ENCODE measurements at regions of chr14 and their contacts with region 1.

Region 1: GRCh38 chr14:94752591-94753436 is 17.1 kb downstream of the GSC start:
- DNase-seq: peak in 4 of 5 donors; percentile 46 to 68 (median 56)
- ATAC-seq: peak in 3 of 4 donors; percentile 40 to 66 (median 52)
- H3K4me3 ChIP-seq: peak overlapping the region in 3 of 12 donors; percentile 7 to 24 (median 22)
- H3K27ac ChIP-seq: peak overlapping the region in 5 of 12 donors; percentile 3 to 73 (median 48)
- H3K4me1 ChIP-seq: peaks cover 0 to 5% (median 0%) of the 10 kb centered on the region in 12 donors
- H3K27me3 ChIP-seq: peaks cover 0 to 11% (median 0%) of the 10 kb centered on the region in 9 donors
- CTCF ChIP-seq: no peak
- POLR2A ChIP-seq: no peak

Region 2: GRCh38 chr14:94646481-94646880 is 106.3 kb before region 1 on chr14:
- intact Hi-C with region 1: no loop called
- DNase-seq: peak in 2 of 5 donors; percentile 25 to 52
- ATAC-seq: peak in 3 of 4 donors; percentile 40 to 91 (median 68)
- H3K4me3 ChIP-seq: no peak overlapping the region
- H3K27ac ChIP-seq: no peak overlapping the region
- H3K4me1 ChIP-seq: no peaks in the 10 kb centered on the region
- H3K27me3 ChIP-seq: no peaks in the 10 kb centered on the region
- CTCF ChIP-seq: no peak
- POLR2A ChIP-seq: no peak

Region 3: GRCh38 chr14:94689218-94689984 is 63.4 kb before region 1 on chr14:
- intact Hi-C with region 1: loop called in 1 of 10 experiments (anchors 5 kb)
- DNase-seq: peak; percentile 54 to 80 (median 64)
- ATAC-seq: peak; percentile 81 to 98 (median 88)
- H3K4me3 ChIP-seq: peak overlapping the region in 5 of 12 donors; percentile 0 to 43 (median 7)
- H3K27ac ChIP-seq: no peak overlapping the region
- H3K4me1 ChIP-seq: peaks cover 0 to 8% (median 0%) of the 10 kb centered on the region in 12 donors
- H3K27me3 ChIP-seq: peaks cover 0 to 12% (median 5%) of the 10 kb centered on the region in 9 donors
- CTCF ChIP-seq: peak; percentile 89 to 99 (median 96)
- POLR2A ChIP-seq: no peak

Region 4: GRCh38 chr14:94738751-94739150 is 14.1 kb before region 1 on chr14:
- intact Hi-C with region 1: loop called in 1 of 10 experiments (anchors 1 kb)
- DNase-seq: no peak
- ATAC-seq: no peak
- H3K4me3 ChIP-seq: no peak overlapping the region
- H3K27ac ChIP-seq: no peak overlapping the region
- H3K4me1 ChIP-seq: no peaks in the 10 kb centered on the region
- H3K27me3 ChIP-seq: peaks cover 0 to 15% (median 0%) of the 10 kb centered on the region in 9 donors
- CTCF ChIP-seq: no peak
- POLR2A ChIP-seq: no peak

Region 5: DNA sequence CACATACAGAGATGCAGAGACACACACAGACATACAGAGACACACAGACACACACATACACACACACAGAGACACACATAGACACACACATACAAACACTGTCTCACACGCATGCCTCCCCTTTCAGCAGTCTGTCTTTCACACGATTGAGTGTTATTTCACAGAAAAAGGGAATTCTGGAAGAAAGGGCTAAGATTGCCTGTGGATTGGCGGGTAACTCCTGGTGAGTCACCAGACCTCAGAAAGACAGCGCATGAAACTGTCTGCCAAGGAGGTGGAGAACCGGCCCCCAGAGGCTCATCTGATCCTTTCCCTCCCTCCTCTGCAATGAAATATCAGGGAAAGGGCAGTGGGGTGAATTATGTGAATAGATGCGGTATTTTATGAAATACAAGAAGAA is 144.3 kb after region 1 on chr14:
- intact Hi-C with region 1: no loop called
- DNase-seq: peak in 1 of 5 donors; percentile 34
- ATAC-seq: peak in 2 of 4 donors; percentile 63 to 75
- H3K4me3 ChIP-seq: no peak overlapping the region
- H3K27ac ChIP-seq: no peak overlapping the region
- H3K4me1 ChIP-seq: no peaks in the 10 kb centered on the region
- H3K27me3 ChIP-seq: peaks cover 0 to 27% (median 5%) of the 10 kb centered on the region in 9 donors
- CTCF ChIP-seq: no peak
- POLR2A ChIP-seq: no peak